ENCODE measurements at regions of chr2 and their contacts with region 1.

Region 1: GRCh38 chr2:209074711-209075110 is 349.1 kb upstream of the MAP2 start:
- DNase-seq: no peak
- ATAC-seq: no peak
- H3K4me3 ChIP-seq: no peak overlapping the region
- H3K27ac ChIP-seq: no peak overlapping the region
- H3K4me1 ChIP-seq: no peaks in the 10 kb centered on the region
- H3K27me3 ChIP-seq: no peaks in the 10 kb centered on the region
- CTCF ChIP-seq: no peak
- EP300 ChIP-seq: no peak
- POLR2A ChIP-seq: no peak
- RAD21 ChIP-seq: no peak

Region 2: DNA sequence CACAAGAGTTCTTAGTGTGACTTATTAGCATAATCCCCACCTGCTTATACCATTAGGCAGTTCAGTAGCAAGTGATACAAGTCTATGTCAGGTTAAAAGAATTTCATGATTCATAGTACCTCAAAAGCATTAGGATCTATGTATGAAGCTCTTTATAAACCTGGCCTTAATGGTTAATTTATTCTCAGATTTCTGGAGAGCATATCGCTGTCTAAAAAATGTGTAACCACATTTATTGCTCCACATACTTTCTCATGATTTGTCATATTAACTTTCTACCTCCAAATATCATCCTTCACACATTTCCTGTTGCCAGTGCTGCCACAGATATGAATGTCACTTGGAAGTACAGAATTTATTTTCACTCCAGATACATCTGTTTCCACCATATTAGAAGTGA is 16.3 kb after region 1 on chr2:
- CTCF ChIA-PET with region 1: no interaction called
- POLR2A ChIA-PET with region 1: no interaction called
- RAD21 ChIA-PET with region 1: no interaction called
- SMC1A ChIA-PET with region 1: interaction called, 4 read pairs
- in situ Hi-C with region 1: no loop called
- intact Hi-C with region 1: loop called (anchors 2 kb)
- DNase-seq: no peak
- ATAC-seq: no peak
- H3K4me3 ChIP-seq: no peak overlapping the region
- H3K27ac ChIP-seq: no peak overlapping the region
- H3K4me1 ChIP-seq: no peaks in the 10 kb centered on the region
- H3K27me3 ChIP-seq: no peaks in the 10 kb centered on the region
- CTCF ChIP-seq: no peak
- EP300 ChIP-seq: no peak
- POLR2A ChIP-seq: no peak
- RAD21 ChIP-seq: no peak

Measured in GM12878 (cell line).